ENCODE measurements at regions of chr5 and their contacts with region 1.

Region 1: DNA sequence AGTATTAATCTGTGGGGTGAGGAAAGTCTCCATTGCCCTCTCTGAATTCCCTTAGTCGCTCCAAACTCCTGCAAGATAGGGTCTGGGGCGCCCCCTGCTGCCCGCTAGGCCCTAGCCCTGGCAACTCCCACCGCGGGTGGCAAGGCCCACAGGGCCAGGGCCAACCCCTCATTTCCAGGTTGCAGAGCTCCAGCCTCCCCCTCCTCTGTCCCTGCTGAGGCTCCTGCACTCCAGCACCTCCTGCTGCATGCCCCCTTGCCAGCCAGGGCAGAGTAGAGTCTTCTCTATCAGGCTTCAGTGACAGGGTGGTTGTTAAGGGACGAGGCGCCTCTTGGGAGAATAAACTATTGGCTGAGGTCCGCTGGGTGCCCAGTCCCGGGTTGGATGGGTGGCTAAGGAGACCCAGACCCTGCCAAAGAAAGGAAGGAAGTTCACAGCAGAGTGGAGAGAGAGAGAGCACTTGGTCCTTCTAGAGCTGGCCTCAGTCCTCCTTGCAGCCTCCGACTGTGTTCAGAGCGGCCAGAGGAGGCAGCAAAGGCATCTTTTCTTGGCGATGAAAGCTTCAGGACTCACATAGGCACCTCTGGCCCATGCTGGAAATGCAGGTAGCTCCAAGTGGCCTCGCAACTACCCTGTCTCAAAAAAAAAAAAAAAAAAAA is 45.6 kb downstream of the SAR1B start:
- DNase-seq: peak; percentile 95
- ATAC-seq: peak; percentile 89
- H3K4me3 Mint-ChIP-seq: peak overlapping the region; percentile 22
- H3K27ac Mint-ChIP-seq: peak overlapping the region; percentile 93
- H3K4me1 Mint-ChIP-seq: peaks cover 17% of the 10 kb centered on the region
- H3K27me3 Mint-ChIP-seq: no peaks in the 10 kb centered on the region
- CTCF ChIP-seq: peak; percentile 76

Region 2: GRCh38 chr5:134304311-134304710 is 282.7 kb before region 1 on chr5:
- CTCF ChIA-PET with region 1: interaction called, 18 read pairs
- POLR2A ChIA-PET with region 1: no interaction called
- DNase-seq: no peak
- ATAC-seq: no peak
- H3K4me3 Mint-ChIP-seq: no peak overlapping the region
- H3K27ac Mint-ChIP-seq: no peak overlapping the region
- H3K4me1 Mint-ChIP-seq: no peaks in the 10 kb centered on the region
- H3K27me3 Mint-ChIP-seq: no peaks in the 10 kb centered on the region
- CTCF ChIP-seq: no peak

Region 3: GRCh38 chr5:134406390-134406789 is 180.6 kb before region 1 on chr5:
- CTCF ChIA-PET with region 1: interaction called, 23 read pairs
- POLR2A ChIA-PET with region 1: interaction called, 5 read pairs
- DNase-seq: no peak
- ATAC-seq: no peak
- H3K4me3 Mint-ChIP-seq: no peak overlapping the region
- H3K27ac Mint-ChIP-seq: no peak overlapping the region
- H3K4me1 Mint-ChIP-seq: peaks cover 18% of the 10 kb centered on the region
- H3K27me3 Mint-ChIP-seq: no peaks in the 10 kb centered on the region
- CTCF ChIP-seq: no peak

Region 4: DNA sequence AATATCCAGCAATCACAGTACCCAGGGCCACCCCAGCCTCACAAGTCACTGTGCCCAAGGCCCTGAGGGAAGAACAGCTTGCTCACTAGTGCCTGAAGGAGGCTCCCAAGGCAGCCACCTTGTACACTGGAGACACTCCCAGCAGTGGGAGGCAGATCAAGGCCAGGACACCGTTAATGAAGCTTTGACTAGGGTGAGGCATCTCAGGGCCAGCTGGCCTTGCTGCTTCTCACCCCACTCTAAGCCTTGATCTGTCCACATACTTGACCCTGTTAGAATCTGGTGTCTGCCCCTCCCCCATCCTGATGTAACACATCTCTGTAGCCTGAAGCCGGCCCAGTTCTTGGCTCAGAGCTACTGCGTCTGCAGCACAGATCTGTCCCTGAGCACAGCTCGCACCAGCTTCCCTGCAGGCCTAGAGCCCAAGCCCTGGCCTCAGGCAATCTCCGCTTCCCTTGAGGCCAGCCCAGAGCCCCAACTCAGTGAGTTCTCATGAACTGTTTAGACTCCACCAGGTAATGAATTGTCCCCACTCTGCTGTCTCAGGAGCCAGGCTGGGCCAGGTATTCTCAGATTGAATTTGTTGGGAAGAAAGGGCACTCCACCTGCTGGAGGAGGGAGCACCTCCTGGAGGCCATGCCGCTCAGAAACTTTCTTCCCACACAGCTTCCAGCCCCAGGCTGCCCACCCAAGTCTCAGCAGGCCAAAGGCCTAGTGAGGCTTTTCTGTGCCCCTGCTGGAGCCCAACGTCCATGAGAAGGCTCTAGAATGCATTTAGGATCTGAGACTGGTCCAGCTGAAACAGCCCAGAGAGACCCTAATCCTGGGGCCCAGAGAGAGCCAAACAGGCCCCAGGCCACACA is 75.0 kb before region 1 on chr5:
- CTCF ChIA-PET with region 1: interaction called, 18 read pairs
- POLR2A ChIA-PET with region 1: no interaction called
- DNase-seq: peak; percentile 76
- ATAC-seq: peak; percentile 68
- H3K4me3 Mint-ChIP-seq: peak overlapping the region; percentile 30
- H3K27ac Mint-ChIP-seq: peak overlapping the region; percentile 97
- H3K4me1 Mint-ChIP-seq: peaks cover 51% of the 10 kb centered on the region
- H3K27me3 Mint-ChIP-seq: no peaks in the 10 kb centered on the region
- CTCF ChIP-seq: no peak

Region 5: GRCh38 chr5:134566741-134567221 is 20.2 kb before region 1 on chr5:
- CTCF ChIA-PET with region 1: interaction called, 16 read pairs
- POLR2A ChIA-PET with region 1: no interaction called
- DNase-seq: no peak
- ATAC-seq: no peak
- H3K4me3 Mint-ChIP-seq: no peak overlapping the region
- H3K27ac Mint-ChIP-seq: peak overlapping the region; percentile 41; the same call in 1 of the 2 replicates
- H3K4me1 Mint-ChIP-seq: 0 out of 2 replicates have a peak, but pooled peaks cover 2% of the 10 kb centered on the region
- H3K27me3 Mint-ChIP-seq: no peaks in the 10 kb centered on the region
- CTCF ChIP-seq: no peak

Region 6: DNA sequence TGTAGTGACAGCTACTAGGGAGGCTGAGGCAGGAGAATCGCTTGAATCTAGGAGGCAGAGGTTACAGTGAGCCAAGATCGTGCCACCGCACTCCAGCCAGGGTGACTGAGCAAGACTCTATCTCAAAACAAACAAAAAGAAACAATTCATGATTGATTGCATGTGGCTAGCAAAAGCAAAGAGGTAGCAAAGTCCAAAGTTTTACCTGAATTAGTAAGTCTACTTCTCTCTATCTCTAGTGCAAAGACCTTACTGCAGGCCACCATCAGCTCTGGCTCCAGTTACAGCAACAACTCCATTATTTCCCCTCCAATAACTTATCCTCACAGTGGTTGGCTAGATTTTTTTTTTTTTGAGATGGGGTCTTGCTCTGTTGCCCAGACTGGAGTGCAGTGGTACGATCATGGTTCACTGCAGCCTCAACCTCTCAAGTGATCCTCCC is 51.8 kb after region 1 on chr5:
- CTCF ChIA-PET with region 1: interaction called, 15 read pairs
- POLR2A ChIA-PET with region 1: no interaction called
- DNase-seq: no peak
- ATAC-seq: no peak
- H3K4me3 Mint-ChIP-seq: no peak overlapping the region
- H3K27ac Mint-ChIP-seq: no peak overlapping the region
- H3K4me1 Mint-ChIP-seq: peaks cover 5% of the 10 kb centered on the region
- H3K27me3 Mint-ChIP-seq: no peaks in the 10 kb centered on the region
- CTCF ChIP-seq: no peak

Region 7: GRCh38 chr5:134813407-134813806 is 226.4 kb after region 1 on chr5:
- CTCF ChIA-PET with region 1: no interaction called
- POLR2A ChIA-PET with region 1: no interaction called
- DNase-seq: no peak
- ATAC-seq: no peak
- H3K4me3 Mint-ChIP-seq: no peak overlapping the region
- H3K27ac Mint-ChIP-seq: no peak overlapping the region
- H3K4me1 Mint-ChIP-seq: no peaks in the 10 kb centered on the region
- H3K27me3 Mint-ChIP-seq: no peaks in the 10 kb centered on the region
- CTCF ChIP-seq: no peak

Region 8: DNA sequence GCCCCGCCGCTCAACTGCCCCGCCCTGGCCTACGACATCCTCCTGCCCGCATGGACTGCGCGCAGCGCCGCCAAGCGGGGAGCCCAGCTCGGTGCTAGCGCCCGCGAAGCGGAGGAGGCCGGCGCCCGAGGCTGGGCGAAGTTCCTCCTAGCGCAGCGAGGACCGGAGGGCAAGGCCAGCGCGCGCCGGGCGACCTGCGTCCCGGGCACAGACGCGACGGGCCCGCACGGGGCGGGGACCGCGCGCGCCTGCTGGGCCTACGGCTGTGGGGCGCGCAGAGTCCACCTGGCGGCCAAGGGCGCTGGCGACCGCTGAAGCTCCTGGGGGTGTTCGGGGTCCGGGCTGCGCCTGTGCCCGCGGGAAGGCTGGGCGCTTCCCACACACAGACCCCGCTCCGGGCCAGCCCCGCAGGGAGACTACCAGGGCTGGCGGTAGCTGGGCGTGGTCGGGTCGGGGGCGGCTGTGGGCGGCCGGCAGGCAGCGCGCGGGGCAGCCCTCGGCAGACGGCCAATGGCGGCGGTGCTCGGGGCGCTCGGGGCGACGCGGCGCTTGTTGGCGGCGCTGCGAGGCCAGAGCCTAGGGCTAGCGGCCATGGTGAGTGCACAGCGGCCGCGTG is 317.7 kb after region 1 on chr5 and contains the start of gene PCBD2:
- CTCF ChIA-PET with region 1: interaction called, 12 read pairs
- POLR2A ChIA-PET with region 1: interaction called, 4 read pairs
- DNase-seq: peak; percentile 96
- ATAC-seq: peak; percentile 90
- H3K4me3 Mint-ChIP-seq: peak within 1 kb of the TSS; percentile 92
- H3K27ac Mint-ChIP-seq: peak within 1 kb of the TSS; percentile 95
- H3K4me1 Mint-ChIP-seq: peaks cover 7% of the 10 kb centered on the region
- H3K27me3 Mint-ChIP-seq: no peaks in the 10 kb centered on the region
- CTCF ChIP-seq: peak; percentile 82
- total RNA-seq, gene PCBD2: 9.9 to 12.8 TPM (median 9.9 TPM) in 3 replicates